ENCODE measurements at regions of chr5 and their contacts with region 1.

Region 1: DNA sequence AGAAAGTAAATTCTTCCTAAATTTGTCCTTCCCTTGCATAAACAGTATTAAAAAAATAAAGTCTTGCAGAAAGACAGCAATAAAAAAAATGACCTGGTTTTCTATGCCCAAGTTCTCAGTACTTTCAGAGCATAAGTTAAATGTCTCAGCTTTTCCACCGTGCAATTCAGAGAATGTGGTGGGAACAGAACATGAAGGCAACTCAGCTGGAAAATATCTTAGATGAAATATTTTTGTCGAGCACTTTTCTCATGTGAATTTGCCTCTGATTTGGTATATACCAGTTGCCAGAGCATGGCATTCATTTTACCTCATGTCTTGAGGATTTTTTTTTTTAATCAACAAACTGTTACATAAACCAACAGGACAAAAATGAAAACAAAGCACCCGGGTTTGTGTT is 176.1 kb downstream of the CETN3 start:
- DNase-seq: no peak
- ATAC-seq: no peak
- H3K4me3 ChIP-seq: no peak overlapping the region
- H3K4me3 Mint-ChIP-seq: no peak overlapping the region
- H3K27ac ChIP-seq: no peak overlapping the region
- H3K27ac Mint-ChIP-seq: no peak overlapping the region
- H3K4me1 ChIP-seq: no peaks in the 10 kb centered on the region
- H3K4me1 Mint-ChIP-seq: no peaks in the 10 kb centered on the region
- H3K27me3 ChIP-seq: no peaks in the 10 kb centered on the region
- H3K27me3 Mint-ChIP-seq: peaks cover 2 to 13% of the 10 kb centered on the region in 2 donors

Region 2: DNA sequence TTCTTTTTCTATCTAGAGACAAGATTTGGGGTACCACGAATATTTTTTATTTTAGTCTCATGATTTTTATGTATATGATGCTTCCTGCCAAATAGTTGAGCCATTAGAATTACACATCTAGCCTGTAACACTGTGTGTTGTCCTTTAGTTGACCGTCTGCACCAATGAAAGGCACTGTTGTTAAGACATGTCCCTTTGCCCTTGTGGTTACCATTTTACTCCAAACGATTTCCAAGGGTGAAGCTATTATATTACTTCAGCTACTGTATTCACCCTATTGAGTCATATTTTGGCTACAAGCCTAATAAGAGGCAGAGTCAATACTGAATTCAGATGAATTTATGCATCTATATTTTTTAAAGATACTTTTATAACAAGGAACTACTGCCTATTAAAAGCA is 31.6 kb before region 1 on chr5:
- CTCF ChIA-PET with region 1: no interaction called
- POLR2A ChIA-PET with region 1: no interaction called
- DNase-seq: no peak
- ATAC-seq: no peak
- H3K4me3 ChIP-seq: no peak overlapping the region
- H3K4me3 Mint-ChIP-seq: no peak overlapping the region
- H3K27ac ChIP-seq: no peak overlapping the region
- H3K27ac Mint-ChIP-seq: no peak overlapping the region
- H3K4me1 ChIP-seq: no peaks in the 10 kb centered on the region
- H3K4me1 Mint-ChIP-seq: no peaks in the 10 kb centered on the region
- H3K27me3 ChIP-seq: no peaks in the 10 kb centered on the region
- H3K27me3 Mint-ChIP-seq: peaks cover 0 to 3% of the 10 kb centered on the region in 2 donors

Region 3: DNA sequence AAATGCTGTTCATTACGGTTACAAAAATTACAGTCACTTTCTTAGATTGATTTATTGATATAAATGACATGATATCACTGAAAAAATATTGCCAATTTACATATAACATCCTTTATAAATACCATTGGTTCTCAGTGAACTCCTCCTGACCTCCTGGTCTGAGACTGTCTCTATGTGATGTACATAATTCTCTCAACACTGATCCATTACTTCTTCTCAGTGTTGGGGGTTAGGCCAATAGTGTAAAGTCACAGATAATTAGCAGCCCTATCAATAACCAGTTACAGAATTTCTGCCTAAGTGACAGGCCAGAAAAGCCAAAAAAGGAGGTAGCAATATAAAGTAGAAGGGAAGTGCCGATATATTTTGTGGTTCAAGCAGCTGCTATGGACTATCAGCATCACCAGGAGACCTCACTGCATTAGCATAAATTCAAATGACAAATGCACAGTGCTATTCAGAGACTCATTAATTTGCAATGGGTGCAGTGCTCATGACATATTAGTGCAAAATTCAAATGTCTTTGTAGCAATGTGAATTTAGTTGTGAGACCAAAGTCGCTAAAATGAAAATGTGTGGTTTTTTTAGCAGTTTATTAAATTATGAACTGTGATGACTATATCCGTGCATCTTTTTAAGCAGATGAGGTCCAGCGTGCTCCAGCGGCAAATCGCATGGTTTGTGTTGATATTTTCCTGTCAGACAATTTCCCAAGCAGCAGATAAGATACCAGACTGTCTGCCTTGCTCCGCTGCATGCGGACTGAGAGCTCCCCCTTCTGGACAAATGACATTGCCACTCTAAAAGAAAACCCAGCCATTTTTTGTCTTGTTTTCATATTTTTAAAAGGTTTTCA is 31.4 kb after region 1 on chr5:
- CTCF ChIA-PET with region 1: interaction called in 1 of 2 experiments, 11 read pairs
- POLR2A ChIA-PET with region 1: no interaction called
- DNase-seq: peak in 30 of 35 experiments; percentile 1 to 62 (median 16)
- ATAC-seq: peak in 1 of 4 experiments; percentile 43
- H3K4me3 ChIP-seq: no peak overlapping the region
- H3K4me3 Mint-ChIP-seq: no peak overlapping the region
- H3K27ac ChIP-seq: no peak overlapping the region
- H3K27ac Mint-ChIP-seq: no peak overlapping the region
- H3K4me1 ChIP-seq: no peaks in the 10 kb centered on the region
- H3K4me1 Mint-ChIP-seq: peaks cover 0 to 4% (median 0%) of the 10 kb centered on the region in 3 donors
- H3K27me3 ChIP-seq: no peaks in the 10 kb centered on the region
- H3K27me3 Mint-ChIP-seq: peaks cover 0 to 3% of the 10 kb centered on the region in 2 donors

Measured in T-cell (primary cell).